ENCODE measurements at regions of chr5 and their contacts with region 1.

Region 1: DNA sequence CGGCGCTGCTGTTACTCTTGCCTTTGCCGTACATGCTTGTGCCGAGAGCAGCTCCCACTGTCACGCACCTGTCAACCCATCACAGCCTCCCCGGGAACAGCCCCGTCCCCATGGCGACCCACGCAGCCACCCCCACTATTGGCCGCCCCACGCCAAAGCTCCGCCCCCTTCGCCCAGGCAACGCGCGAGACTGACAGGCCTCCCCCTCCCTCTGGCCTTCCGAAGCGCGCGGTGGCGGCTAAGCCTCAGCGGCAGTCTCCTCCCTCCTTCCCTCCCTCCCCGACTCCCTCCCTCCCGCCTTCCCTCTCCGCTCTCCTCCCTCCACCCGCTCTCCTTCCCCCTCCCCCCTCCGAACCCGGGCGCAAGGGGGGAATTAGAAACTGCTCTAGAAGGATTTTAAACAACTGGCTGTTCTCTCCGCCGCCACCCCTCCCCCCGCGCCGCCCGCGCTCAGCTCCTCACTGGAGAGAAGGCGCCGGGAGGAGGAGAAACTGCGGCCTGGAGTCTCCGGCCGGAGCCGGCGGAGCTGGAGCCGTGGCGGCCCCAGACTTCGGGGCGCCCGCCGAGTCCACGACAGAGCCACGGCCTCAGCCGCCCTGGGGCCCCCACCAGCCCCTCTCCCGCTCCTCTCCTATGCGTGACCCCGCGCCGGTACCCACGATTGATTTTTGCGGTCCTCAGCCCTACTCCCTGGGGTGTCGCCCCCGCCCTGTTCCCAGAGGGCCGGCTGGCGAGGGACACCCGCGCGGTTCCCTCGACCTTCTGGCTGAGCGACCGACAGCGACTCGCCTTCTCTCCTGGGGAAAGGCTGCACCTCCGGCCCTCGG is at the start of gene SSBP2:
- DNase-seq: peak; percentile 97
- H3K4me3 ChIP-seq: peak within 1 kb of the TSS; percentile 73
- H3K27ac ChIP-seq: peak within 1 kb of the TSS; percentile 80 to 95
- H3K4me1 ChIP-seq: peaks cover 10 to 15% of the 10 kb centered on the region in 2 experiments; a peak in 3 of 4 replicates
- H3K27me3 ChIP-seq: no peaks in the 10 kb centered on the region
- CTCF ChIP-seq: no peak
- EP300 ChIP-seq: peak; percentile 99 to 100
- RAD21 ChIP-seq: peak; percentile 68
- polyA plus RNA-seq, gene SSBP2: 35.3 and 52.2 TPM in 2 replicates

Region 2: DNA sequence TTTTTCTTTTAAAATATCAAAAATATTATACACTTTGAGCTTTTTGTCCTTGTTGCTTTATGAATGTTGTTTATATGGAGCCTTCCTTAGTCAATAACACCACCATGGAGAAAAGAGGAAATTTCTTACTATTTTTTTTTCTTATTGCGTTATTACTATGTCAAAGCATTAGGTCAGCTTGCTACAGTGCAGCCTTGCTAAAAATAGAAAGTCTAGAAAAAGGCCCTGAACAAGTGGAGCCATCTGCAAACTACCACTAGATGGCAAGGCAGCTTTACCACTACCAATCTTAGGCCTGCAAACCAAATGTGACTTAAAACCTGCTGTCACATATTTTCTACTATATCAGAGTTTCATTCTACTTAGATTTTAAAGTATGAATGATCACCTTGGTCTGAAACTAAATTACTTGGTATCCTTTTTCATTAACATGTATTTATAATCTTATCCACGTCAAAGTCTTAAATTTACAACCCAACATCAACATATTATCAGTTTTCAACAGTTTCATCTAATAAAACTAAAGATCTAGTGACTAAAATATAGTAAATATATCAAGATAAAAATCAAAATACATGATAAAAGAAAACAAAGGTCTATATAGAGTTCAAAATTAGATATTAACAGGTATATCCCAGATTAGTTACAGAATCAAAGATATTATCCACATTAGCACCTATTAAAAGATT is 244.2 kb before region 1 on chr5:
- CTCF ChIA-PET with region 1: interaction called, 11 read pairs
- POLR2A ChIA-PET with region 1: no interaction called
- DNase-seq: peak; percentile 66
- H3K4me3 ChIP-seq: no peak overlapping the region; a peak in 1 of 4 replicates
- H3K27ac ChIP-seq: peak overlapping the region in 1 of 2 experiments; percentile 50; a peak in 2 of 4 replicates
- H3K4me1 ChIP-seq: peaks cover 0 to 9% of the 10 kb centered on the region in 2 experiments; a peak in 2 of 4 replicates
- H3K27me3 ChIP-seq: no peaks in the 10 kb centered on the region
- CTCF ChIP-seq: peak; percentile 96
- EP300 ChIP-seq: peak in 1 of 2 experiments; percentile 29; a peak in 1 of 4 replicates
- RAD21 ChIP-seq: peak; percentile 98

Region 3: DNA sequence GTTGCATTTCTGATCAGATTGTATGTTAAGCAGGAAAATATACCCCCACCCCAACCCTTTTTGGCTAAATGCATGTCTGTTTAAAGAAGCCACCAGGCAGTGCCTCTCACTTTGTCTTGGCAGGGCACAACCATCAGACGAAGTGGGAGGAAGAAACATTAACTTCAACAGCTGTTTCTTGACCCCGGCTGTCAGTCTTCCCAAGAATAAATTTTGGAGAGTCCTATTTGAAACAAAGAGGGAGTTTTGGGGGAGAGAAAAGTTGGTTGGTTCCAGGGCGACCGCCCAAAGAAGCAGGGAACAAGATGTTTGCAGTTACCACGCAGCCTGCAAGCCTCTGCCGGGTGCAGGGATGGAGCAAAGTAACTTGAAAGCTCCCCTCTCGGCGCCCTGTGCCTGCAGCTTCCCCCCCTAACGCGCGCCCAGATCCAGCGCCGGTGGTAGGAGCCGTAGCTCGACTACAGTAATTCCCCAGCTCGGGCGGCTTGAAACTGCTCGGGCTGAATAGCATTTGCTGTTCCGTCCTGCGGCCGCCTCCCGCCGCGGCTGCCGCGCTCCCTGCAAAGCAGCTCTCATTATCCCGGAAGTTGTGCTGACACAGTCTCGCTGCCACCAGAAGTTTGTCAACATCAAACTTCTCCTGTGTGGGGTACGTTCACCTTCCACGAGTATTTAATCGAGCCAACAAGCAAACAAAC is 100.4 kb after region 1 on chr5:
- CTCF ChIA-PET with region 1: interaction called, 56 read pairs
- POLR2A ChIA-PET with region 1: interaction called, 97 read pairs
- DNase-seq: peak; percentile 90
- H3K4me3 ChIP-seq: peak overlapping the region; percentile 45 to 54
- H3K27ac ChIP-seq: peak overlapping the region; percentile 92 to 99
- H3K4me1 ChIP-seq: peaks cover 55 to 56% of the 10 kb centered on the region in 2 experiments
- H3K27me3 ChIP-seq: no peaks in the 10 kb centered on the region
- CTCF ChIP-seq: no peak
- EP300 ChIP-seq: peak; percentile 99 to 100
- RAD21 ChIP-seq: peak; percentile 69

Region 4: DNA sequence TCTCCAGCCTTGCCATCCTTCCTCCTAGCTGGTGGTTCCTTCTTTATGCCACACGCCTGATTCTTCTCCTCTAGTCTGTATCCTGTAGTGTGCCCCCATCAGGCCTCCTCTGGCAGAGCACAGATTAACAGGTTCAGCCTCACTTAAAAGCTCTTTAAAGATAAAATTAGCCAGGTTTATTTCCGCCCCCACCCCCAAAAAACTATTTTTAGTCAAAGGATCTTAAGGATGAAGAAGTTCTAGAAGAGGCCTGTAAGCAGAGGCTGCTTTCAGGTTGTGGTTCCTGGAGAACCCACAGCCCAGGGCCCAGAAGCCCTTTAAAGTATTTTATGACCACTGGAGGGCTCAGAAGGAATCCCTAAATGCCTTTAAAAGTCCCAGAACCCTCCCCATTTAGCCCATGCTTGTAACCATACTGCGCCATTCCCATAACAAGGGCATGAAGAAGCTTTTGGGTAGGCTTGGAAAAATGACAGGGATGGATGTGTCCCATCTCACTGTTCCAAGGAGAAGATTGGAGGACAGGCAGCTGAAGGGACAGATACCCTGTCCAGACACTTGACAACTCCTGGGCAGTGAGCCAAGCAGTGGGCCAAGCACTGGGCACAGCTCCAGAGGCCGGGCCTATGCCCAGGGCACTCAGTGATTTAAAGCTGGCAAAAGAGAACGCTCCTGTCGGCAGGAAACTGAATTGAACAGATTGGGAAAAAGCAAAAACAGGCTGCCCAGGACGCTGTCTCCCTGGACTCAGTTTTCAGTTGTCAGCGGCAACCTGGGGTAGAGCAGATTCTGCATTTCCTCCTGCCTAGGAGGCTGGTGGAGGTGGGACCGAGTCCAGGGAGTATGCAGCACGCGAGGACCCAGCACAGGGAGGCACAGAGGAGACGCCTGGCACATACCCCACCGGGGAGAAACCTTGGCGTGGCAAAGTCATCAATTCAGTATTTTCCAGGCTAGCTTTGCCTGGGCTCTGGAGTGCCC is 106.0 kb after region 1 on chr5:
- CTCF ChIA-PET with region 1: interaction called, 56 read pairs
- POLR2A ChIA-PET with region 1: interaction called, 97 read pairs
- DNase-seq: peak; percentile 81
- H3K4me3 ChIP-seq: peak overlapping the region; percentile 28 to 37; a peak in 3 of 4 replicates
- H3K27ac ChIP-seq: peak overlapping the region; percentile 70 to 98
- H3K4me1 ChIP-seq: peaks cover 46 to 50% of the 10 kb centered on the region in 2 experiments
- H3K27me3 ChIP-seq: no peaks in the 10 kb centered on the region
- CTCF ChIP-seq: peak; percentile 52
- EP300 ChIP-seq: peak; percentile 51 to 87; a peak in 3 of 4 replicates
- RAD21 ChIP-seq: peak; percentile 35

Region 5: DNA sequence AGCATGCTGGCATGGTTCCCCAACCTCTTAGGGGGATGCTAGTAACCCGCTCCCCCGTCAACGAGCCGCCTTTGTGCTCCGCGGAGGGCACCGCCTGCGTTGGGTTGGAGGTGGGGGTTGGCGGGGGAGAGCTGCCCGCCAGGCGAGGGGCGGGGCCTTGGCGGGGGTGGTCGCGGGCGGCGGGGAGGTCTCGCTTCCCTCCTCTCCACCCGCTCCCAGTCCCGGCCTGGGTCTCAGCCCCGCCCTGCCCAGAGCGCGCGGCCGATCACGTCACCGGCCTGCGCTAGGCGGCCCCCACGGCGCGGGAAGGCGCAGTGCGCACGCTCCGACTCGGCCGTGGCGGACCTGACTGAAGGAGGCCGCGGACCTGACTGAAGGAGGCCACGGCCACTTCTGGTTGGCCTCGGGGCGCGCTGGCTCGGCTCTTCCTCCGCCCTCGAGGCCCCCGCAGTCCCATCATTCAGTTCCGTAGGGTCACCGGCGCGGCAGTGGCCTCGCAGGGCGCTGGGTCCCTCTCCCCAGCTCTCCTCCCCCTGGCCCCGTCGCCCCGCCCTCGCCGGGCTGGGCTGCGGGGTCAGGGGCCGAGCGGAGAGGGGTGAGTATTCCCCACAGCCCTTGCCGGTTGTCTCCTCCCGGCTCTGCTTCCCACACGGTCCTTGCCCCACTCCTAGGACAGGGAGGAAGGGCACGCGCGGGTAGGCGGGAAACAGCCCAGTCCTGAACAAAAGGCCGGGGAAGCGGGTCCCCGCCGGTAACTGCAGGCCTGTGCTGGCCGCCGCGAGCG is 220.7 kb after region 1 on chr5 and contains the start of gene ATG10:
- CTCF ChIA-PET with region 1: no interaction called
- POLR2A ChIA-PET with region 1: interaction called, 13 read pairs
- DNase-seq: peak; percentile 99
- H3K4me3 ChIP-seq: peak within 1 kb of the TSS; percentile 80 to 84
- H3K27ac ChIP-seq: peak within 1 kb of the TSS; percentile 92 to 98
- H3K4me1 ChIP-seq: peaks cover 0 to 8% of the 10 kb centered on the region in 2 experiments; a peak in 3 of 4 replicates
- H3K27me3 ChIP-seq: no peaks in the 10 kb centered on the region
- CTCF ChIP-seq: no peak
- EP300 ChIP-seq: peak in 1 of 2 experiments; percentile 33; a peak in 1 of 4 replicates
- RAD21 ChIP-seq: no peak
- polyA plus RNA-seq, gene ATG10: 3.2 and 3.4 TPM in 2 replicates

Measured in SK-N-SH (cell line).